Activated B cell treated with CpG ODN at 0.5 μM for 24 hours (primary cell): ENCODE measurements at regions of chr2 and their contacts with region 1.

Region 1: GRCh38 chr2:111157798-111158197 is 37.1 kb downstream of the BCL2L11 start:
- DNase-seq: no peak
- ATAC-seq: peak; percentile 65
- H3K4me3 Mint-ChIP-seq: peak overlapping the region; percentile 73
- H3K27ac Mint-ChIP-seq: peak overlapping the region; percentile 95
- H3K4me1 Mint-ChIP-seq: peaks cover 71% of the 10 kb centered on the region
- H3K27me3 Mint-ChIP-seq: no peaks in the 10 kb centered on the region
- CTCF ChIP-seq: no peak

Region 2: GRCh38 chr2:111128096-111128495 is 29.7 kb before region 1 on chr2:
- CTCF ChIA-PET with region 1: no interaction called
- POLR2A ChIA-PET with region 1: interaction called, 16 read pairs
- intact Hi-C with region 1: no loop called
- DNase-seq: no peak
- ATAC-seq: no peak
- H3K4me3 Mint-ChIP-seq: no peak overlapping the region
- H3K27ac Mint-ChIP-seq: no peak overlapping the region
- H3K4me1 Mint-ChIP-seq: peaks cover 64% of the 10 kb centered on the region
- H3K27me3 Mint-ChIP-seq: no peaks in the 10 kb centered on the region
- CTCF ChIP-seq: no peak

Region 3: GRCh38 chr2:111194835-111195621 is 37.2 kb after region 1 on chr2:
- CTCF ChIA-PET with region 1: no interaction called
- POLR2A ChIA-PET with region 1: interaction called, 13 read pairs
- intact Hi-C with region 1: no loop called
- DNase-seq: no peak
- ATAC-seq: peak; percentile 78
- H3K4me3 Mint-ChIP-seq: peak overlapping the region; percentile 6
- H3K27ac Mint-ChIP-seq: peak overlapping the region; percentile 37
- H3K4me1 Mint-ChIP-seq: peaks cover 43% of the 10 kb centered on the region
- H3K27me3 Mint-ChIP-seq: no peaks in the 10 kb centered on the region
- CTCF ChIP-seq: no peak

Region 4: DNA sequence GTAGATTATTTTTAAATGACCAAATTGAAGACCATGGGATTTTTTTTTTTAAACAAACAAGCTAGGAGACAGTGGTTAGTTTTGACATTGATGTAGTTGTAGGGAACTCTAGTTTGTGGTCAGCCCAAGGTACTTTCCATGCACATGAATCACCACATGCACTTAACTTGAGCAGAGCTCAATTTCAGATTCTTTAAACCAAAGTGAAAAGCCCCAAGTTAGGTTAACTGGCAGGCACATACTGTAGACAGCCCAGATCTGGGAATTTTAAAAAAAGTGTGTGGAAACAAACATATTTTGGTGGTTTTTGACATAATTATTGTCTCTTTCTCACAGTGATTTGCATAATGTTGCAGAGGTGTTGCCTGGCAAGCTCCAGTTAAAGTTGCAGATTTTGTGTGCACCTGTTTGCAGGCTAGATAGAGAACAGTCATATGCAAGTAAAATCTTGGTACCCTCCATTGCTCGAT is 51.3 kb after region 1 on chr2:
- CTCF ChIA-PET with region 1: interaction called, 8 read pairs
- POLR2A ChIA-PET with region 1: interaction called, 35 read pairs
- intact Hi-C with region 1: loop called (anchors 1 kb)
- DNase-seq: no peak
- ATAC-seq: peak; percentile 91
- H3K4me3 Mint-ChIP-seq: peak overlapping the region; percentile 35
- H3K27ac Mint-ChIP-seq: peak overlapping the region; percentile 80
- H3K4me1 Mint-ChIP-seq: peaks cover 37% of the 10 kb centered on the region
- H3K27me3 Mint-ChIP-seq: no peaks in the 10 kb centered on the region
- CTCF ChIP-seq: no peak

Region 5: DNA sequence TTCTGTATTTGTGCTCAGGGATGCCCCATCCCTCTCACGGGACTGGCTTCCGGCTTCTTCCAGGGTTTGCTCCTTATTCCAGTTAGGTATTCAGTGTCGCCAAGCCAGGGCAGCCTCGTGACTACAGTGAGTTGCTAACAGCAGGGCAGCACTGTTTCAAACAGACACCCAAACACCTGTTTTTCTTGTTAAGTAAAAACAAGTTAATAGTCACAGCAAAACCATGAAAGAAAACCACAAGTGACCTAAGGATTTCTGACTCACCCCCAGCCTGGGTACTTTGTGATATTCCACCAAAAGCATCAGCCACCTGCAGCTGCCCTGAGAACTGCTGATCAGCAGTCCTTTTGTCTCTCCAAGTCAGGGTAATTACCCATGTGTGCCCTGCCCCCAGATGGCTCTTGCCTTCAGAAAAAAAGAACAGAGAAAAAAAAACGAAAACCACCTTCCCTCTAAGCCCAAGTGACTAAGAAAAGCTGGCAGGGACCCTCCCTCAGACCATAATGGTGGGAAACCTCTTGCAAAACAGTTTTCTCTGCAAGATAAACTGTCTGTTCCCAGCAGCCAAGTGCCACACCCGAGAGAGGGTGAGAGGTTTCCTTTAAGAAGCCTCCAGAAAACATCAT is 548.0 kb after region 1 on chr2:
- CTCF ChIA-PET with region 1: no interaction called
- POLR2A ChIA-PET with region 1: interaction called, 4 read pairs
- intact Hi-C with region 1: loop called (anchors 1 kb)
- DNase-seq: no peak
- ATAC-seq: peak; percentile 81
- H3K4me3 Mint-ChIP-seq: peak overlapping the region; percentile 20
- H3K27ac Mint-ChIP-seq: peak overlapping the region; percentile 81
- H3K4me1 Mint-ChIP-seq: peaks cover 24% of the 10 kb centered on the region
- H3K27me3 Mint-ChIP-seq: peaks cover 2% of the 10 kb centered on the region
- CTCF ChIP-seq: no peak